Activated naive CD4-positive, alpha-beta T cell treated with anti-CD3 and anti-CD28 coated beads for 36 hours (primary cell): ENCODE measurements at regions of chr2 and their contacts with region 1.

Region 1: GRCh38 chr2:202278944-202279343 is 13.4 kb downstream of the NOP58 start:
- DNase-seq: no peak
- H3K4me3 Mint-ChIP-seq: no peak overlapping the region
- H3K27ac Mint-ChIP-seq: peak overlapping the region; percentile 92
- H3K4me1 Mint-ChIP-seq: peaks cover 51% of the 10 kb centered on the region
- H3K27me3 Mint-ChIP-seq: no peaks in the 10 kb centered on the region

Region 2: DNA sequence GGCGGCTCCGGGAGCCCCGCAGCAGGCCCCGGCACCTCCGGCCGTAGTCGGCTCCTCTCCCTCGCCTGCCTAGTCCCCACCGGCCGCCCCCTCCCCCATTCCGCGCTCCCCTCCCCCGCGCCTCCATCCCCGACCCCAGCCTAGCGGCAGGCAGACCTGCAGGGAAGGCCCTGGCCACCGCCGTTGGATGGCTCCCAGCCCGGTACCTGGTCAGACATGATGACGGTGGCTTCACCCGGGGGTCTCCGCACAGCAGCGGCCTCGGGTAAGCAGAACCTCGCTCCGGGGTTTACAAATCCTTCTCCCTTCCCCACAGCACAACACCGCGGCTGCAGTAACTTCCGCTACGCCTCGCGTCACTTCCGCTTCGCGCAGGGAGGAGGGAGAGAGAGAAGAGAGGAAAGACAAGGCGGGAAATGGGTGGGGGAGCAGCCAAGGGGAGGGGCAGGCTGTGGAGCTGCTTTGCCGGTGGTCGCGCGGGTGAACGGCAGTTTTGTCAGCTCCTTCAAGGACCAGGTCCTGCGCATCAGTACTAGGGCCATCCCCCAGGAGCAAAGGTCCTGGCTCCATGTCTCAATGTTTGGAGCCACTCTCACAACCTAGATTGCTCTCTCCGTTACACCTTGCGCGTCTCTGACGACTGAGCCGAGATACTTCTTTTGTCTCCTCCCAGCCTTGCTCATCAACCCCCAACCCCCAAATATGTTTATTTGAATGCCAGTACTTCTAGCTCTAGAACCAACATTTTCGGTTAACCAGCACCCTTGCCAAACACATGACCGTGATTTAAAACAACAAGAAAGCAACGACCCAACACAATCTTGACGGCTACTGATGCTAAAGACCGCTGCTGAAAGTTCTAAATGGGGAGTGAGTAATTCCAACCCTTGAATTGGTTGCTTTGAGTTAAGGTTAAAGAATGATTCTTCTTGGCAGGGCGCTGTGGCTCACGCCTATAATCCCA is 40.4 kb before region 1 on chr2 and contains the start of gene SUMO1:
- CTCF ChIA-PET with region 1: interaction called, 3 read pairs
- intact Hi-C with region 1: loop called (anchors 1 kb)
- DNase-seq: peak; percentile 97
- H3K4me3 Mint-ChIP-seq: peak within 1 kb of the TSS; percentile 97
- H3K27ac Mint-ChIP-seq: peak within 1 kb of the TSS; percentile 91
- H3K4me1 Mint-ChIP-seq: peaks cover 31% of the 10 kb centered on the region
- H3K27me3 Mint-ChIP-seq: no peaks in the 10 kb centered on the region
- total RNA-seq, gene SUMO1: 131 to 132 TPM

Region 3: DNA sequence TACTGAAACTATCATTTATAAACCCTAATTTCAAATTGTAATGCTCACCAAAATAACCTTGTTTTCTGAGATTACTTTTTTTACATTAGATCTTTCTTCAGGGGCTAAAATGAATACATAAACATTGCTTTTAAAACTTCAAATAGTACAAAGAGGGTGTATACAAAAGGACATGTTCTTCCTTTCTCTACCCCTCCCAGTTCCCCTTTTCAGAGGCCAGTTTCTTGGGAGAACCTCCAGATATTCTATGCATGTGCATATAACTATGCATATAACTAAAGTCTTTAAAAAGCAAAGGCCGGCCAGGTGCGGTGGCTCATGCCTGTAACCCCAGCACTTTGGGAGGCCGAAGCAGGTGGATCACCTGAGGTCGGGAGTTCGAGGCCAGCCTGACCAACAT is 345.2 kb after region 1 on chr2:
- CTCF ChIA-PET with region 1: no interaction called
- intact Hi-C with region 1: no loop called
- DNase-seq: no peak
- H3K4me3 Mint-ChIP-seq: no peak overlapping the region
- H3K27ac Mint-ChIP-seq: no peak overlapping the region
- H3K4me1 Mint-ChIP-seq: no peaks in the 10 kb centered on the region
- H3K27me3 Mint-ChIP-seq: no peaks in the 10 kb centered on the region